PC-3 (cell line): ENCODE measurements at regions of chr5 and their contacts with region 1.

Region 1: DNA sequence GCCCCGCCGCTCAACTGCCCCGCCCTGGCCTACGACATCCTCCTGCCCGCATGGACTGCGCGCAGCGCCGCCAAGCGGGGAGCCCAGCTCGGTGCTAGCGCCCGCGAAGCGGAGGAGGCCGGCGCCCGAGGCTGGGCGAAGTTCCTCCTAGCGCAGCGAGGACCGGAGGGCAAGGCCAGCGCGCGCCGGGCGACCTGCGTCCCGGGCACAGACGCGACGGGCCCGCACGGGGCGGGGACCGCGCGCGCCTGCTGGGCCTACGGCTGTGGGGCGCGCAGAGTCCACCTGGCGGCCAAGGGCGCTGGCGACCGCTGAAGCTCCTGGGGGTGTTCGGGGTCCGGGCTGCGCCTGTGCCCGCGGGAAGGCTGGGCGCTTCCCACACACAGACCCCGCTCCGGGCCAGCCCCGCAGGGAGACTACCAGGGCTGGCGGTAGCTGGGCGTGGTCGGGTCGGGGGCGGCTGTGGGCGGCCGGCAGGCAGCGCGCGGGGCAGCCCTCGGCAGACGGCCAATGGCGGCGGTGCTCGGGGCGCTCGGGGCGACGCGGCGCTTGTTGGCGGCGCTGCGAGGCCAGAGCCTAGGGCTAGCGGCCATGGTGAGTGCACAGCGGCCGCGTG is at the start of gene PCBD2:
- DNase-seq: peak; percentile 92
- ATAC-seq: peak; percentile 86
- H3K4me3 ChIP-seq: peak within 1 kb of the TSS; percentile 90
- H3K27ac ChIP-seq: peak within 1 kb of the TSS; percentile 89
- H3K4me1 ChIP-seq: peaks cover 6% of the 10 kb centered on the region; the same call in 1 of the 2 replicates
- H3K27me3 ChIP-seq: no peaks in the 10 kb centered on the region
- CTCF ChIP-seq: peak; percentile 67
- total RNA-seq, gene PCBD2: 5.4 and 7.0 TPM in 2 replicates

Region 2: GRCh38 chr5:134738133-134738962 is 166.4 kb before region 1 on chr5 and contains the start of gene CAMLG:
- CTCF ChIA-PET with region 1: no interaction called
- POLR2A ChIA-PET with region 1: no interaction called
- intact Hi-C with region 1: loop called (anchors 1 kb)
- DNase-seq: peak; percentile 95
- ATAC-seq: peak; percentile 93
- H3K4me3 ChIP-seq: peak within 1 kb of the TSS; percentile 94
- H3K27ac ChIP-seq: peak within 1 kb of the TSS; percentile 70
- H3K4me1 ChIP-seq: peaks cover 8% of the 10 kb centered on the region
- H3K27me3 ChIP-seq: no peaks in the 10 kb centered on the region
- CTCF ChIP-seq: peak; percentile 55; the same call in 1 of the 2 replicates
- total RNA-seq, gene CAMLG: 12.9 and 19.5 TPM in 2 replicates

Region 3: DNA sequence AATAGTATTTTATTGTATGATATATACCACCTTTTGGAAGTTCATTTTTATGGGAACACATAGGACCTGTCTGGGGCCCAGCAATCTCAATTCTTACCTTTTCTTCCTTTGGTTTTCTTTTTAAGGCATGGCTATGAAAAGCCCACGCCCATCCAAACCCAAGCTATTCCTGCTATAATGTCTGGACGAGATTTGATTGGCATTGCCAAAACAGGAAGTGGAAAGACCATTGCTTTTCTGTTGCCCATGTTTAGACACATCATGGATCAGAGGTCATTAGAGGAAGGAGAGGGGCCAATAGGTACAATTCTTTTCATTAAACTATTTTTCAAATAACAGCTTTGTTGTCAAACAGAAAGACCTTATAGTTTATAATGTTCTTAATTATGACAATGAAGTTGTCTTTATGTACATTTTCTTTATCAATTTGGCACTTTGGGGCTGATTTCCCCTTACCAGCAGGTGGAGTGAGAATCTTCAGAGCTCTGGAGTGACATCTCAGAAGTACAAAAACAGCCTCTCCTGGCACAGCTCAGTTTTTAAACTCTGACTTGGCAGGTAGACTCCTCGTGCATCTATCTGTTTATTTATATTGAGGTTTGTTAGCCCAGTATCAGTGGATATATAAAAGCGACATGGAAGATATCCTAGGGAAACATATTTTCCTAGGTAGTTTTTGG is 120.4 kb before region 1 on chr5:
- CTCF ChIA-PET with region 1: no interaction called
- POLR2A ChIA-PET with region 1: no interaction called
- intact Hi-C with region 1: loop called (anchors 5 kb)
- DNase-seq: no peak
- ATAC-seq: no peak
- H3K4me3 ChIP-seq: no peak overlapping the region
- H3K27ac ChIP-seq: no peak overlapping the region
- H3K4me1 ChIP-seq: no peaks in the 10 kb centered on the region
- H3K27me3 ChIP-seq: no peaks in the 10 kb centered on the region
- CTCF ChIP-seq: peak; percentile 38; the same call in 1 of the 2 replicates

Region 4: GRCh38 chr5:134851307-134851923 is 53.3 kb before region 1 on chr5:
- CTCF ChIA-PET with region 1: no interaction called
- POLR2A ChIA-PET with region 1: no interaction called
- intact Hi-C with region 1: loop called (anchors 2 kb)
- DNase-seq: peak; percentile 56
- ATAC-seq: peak; percentile 58
- H3K4me3 ChIP-seq: no peak overlapping the region
- H3K27ac ChIP-seq: no peak overlapping the region
- H3K4me1 ChIP-seq: peaks cover 9% of the 10 kb centered on the region
- H3K27me3 ChIP-seq: no peaks in the 10 kb centered on the region
- CTCF ChIP-seq: peak; percentile 63

Region 5: DNA sequence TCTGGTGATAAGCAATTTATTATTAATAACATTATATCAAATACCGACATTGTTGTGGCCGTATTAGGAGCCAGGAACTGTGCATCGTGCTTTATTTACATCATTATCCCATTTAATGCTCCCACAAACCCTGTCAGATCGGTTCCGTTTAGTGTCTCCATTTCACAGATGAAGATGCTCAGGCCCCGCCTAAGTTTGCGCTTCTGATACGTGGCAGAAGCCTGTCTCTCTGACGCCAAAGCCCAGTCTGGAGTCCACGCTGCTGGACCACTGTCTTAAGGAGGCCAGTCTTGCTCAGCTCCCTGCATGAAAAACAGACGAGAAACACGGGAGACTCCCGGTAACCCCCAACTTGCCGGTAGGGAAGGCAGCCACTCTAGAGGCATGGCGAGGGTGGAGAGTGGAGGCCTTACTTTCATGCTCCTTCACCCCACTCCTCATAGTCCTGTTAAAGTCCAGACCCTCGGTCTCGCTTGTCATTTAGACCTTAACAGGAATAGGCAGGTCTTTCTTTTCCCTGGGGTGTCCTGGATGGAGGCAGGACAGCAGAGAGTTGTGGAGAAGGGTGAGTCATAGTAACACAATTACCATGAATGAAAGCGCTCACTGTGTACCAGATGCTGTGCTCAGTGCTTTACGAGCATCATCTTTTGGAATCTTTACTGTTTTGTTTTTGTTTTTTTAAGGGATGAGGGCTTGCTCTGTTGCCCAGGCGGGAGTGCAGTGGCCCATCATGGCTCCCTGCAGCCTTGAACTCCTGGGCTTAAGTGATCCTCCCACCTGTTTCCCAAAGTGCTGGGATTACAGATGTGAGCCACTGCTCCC is 29.7 kb before region 1 on chr5:
- CTCF ChIA-PET with region 1: no interaction called
- POLR2A ChIA-PET with region 1: no interaction called
- intact Hi-C with region 1: loop called (anchors 1 kb)
- DNase-seq: peak; percentile 55
- ATAC-seq: peak; percentile 72
- H3K4me3 ChIP-seq: peak overlapping the region; percentile 81
- H3K27ac ChIP-seq: peak overlapping the region; percentile 47
- H3K4me1 ChIP-seq: peaks cover 6% of the 10 kb centered on the region; the same call in 1 of the 2 replicates
- H3K27me3 ChIP-seq: no peaks in the 10 kb centered on the region
- CTCF ChIP-seq: no peak

Region 6: GRCh38 chr5:134964359-134965270 is 59.9 kb after region 1 on chr5:
- CTCF ChIA-PET with region 1: no interaction called
- POLR2A ChIA-PET with region 1: no interaction called
- intact Hi-C with region 1: no loop called
- DNase-seq: no peak
- ATAC-seq: no peak
- H3K4me3 ChIP-seq: no peak overlapping the region
- H3K27ac ChIP-seq: no peak overlapping the region
- H3K4me1 ChIP-seq: peaks cover 10% of the 10 kb centered on the region
- H3K27me3 ChIP-seq: no peaks in the 10 kb centered on the region
- CTCF ChIP-seq: no peak

Region 7: GRCh38 chr5:135332519-135333150 is 427.9 kb after region 1 on chr5:
- CTCF ChIA-PET with region 1: no interaction called
- POLR2A ChIA-PET with region 1: no interaction called
- intact Hi-C with region 1: loop called (anchors 10 kb)
- DNase-seq: peak; percentile 80
- ATAC-seq: peak; percentile 63
- H3K4me3 ChIP-seq: no peak overlapping the region
- H3K27ac ChIP-seq: no peak overlapping the region
- H3K4me1 ChIP-seq: no peaks in the 10 kb centered on the region
- H3K27me3 ChIP-seq: no peaks in the 10 kb centered on the region
- CTCF ChIP-seq: peak; percentile 70

Region 8: GRCh38 chr5:135625961-135626360 is 721.2 kb after region 1 on chr5:
- CTCF ChIA-PET with region 1: no interaction called
- POLR2A ChIA-PET with region 1: no interaction called
- intact Hi-C with region 1: no loop called
- DNase-seq: no peak
- ATAC-seq: no peak
- H3K4me3 ChIP-seq: no peak overlapping the region
- H3K27ac ChIP-seq: no peak overlapping the region
- H3K4me1 ChIP-seq: no peaks in the 10 kb centered on the region
- H3K27me3 ChIP-seq: peaks cover 12% of the 10 kb centered on the region; the same call in 1 of the 2 replicates
- CTCF ChIP-seq: no peak